Activated B cell treated with CpG ODN at 0.5 μM for 24 hours (primary cell): ENCODE measurements at regions of chr19 and their contacts with region 1.

Region 1: DNA sequence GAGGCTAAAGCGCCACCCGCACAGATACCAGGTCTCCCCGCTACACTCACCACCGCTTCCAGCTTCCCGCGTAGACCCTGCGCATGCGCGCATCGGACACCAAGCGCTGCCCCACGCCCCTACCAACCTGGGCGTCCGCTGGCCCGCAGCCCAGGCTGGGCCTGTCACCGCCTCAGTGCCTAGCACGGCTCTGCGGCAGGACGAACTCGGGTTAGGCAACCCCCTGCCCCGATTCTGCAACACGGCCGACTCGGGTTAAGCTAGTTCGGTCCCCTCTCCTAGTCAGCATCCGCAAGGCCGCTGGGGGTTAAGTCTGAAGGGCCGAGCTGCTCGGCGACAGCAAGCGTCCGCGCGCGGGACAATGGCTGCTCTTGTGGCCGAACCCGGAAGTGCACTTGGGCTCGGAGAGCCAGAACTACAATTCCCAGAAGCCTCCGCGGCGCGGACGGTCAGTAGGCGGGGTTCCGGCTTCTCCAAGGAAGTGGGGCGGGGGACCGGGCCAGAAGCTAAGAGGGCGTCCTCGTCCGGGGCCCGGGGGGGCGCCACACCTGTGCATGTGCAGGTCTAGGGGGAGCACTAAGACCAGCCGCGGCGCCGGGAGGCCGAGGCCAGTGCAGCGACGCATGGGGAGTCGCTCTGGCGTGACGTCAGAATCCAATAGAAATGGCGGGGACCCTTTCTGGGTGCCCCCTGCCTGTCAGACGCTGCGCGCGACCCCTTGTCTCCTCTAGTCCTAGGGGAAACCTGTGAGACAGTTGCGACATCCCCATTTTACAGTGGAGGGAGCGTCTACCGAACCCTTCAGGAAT is at the start of gene ZNF180:
- DNase-seq: peak; percentile 95
- ATAC-seq: peak; percentile 91
- H3K4me3 Mint-ChIP-seq: peak within 1 kb of the TSS; percentile 96
- H3K27ac Mint-ChIP-seq: peak within 1 kb of the TSS; percentile 86
- H3K4me1 Mint-ChIP-seq: peaks cover 36% of the 10 kb centered on the region
- H3K27me3 Mint-ChIP-seq: peaks cover 10% of the 10 kb centered on the region
- CTCF ChIP-seq: no peak
- total RNA-seq, gene ZNF180: 11.6 and 14.4 TPM in 2 replicates

Region 2: DNA sequence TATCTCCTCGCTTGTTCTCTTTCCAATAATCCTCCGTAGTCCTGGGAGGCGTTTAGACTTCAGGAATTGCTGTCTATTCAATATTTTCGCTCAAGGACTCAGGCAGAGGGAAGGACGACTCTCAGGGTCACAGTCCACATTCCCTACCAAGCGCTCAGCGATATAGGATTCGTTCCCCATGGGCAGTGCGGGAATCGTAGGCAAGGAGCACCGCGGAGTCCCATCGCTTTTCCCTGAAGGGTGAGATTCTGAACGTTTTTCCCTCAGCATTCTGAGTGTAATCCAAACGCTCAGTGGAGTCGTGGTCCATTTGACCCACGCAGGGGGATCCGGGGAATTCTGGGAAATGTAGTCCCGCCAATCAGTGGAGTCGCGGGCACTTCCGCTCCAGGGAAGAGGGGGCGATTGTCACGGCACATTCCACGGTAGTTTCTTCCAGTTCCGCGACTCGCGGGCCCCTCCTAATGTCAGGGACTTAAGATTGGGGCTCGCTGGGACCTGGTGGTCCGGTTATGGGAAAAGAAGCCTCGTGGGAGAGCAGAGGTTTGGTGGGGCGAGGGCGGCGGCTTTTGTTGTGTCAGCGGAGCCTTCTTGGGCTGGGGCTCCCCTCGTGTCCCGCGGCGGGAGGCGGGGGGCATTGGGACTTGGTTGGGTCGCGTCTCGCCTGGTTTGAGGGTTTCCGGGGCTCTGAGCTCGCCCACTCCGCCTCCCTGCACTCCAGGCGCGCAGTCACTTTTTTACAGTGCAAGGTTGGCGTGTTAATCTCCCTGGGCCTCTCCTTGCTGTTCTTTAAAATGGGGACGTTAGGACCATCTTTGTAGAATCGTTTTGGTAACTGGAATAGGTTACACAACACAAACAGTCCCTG is 358.9 kb before region 1 on chr19 and contains the start of gene ZNF234:
- CTCF ChIA-PET with region 1: no interaction called
- POLR2A ChIA-PET with region 1: interaction called, 5 read pairs
- intact Hi-C with region 1: loop called (anchors 1 kb)
- DNase-seq: peak; percentile 58
- ATAC-seq: peak; percentile 93
- H3K4me3 Mint-ChIP-seq: peak within 1 kb of the TSS; percentile 98
- H3K27ac Mint-ChIP-seq: peak within 1 kb of the TSS; percentile 85
- H3K4me1 Mint-ChIP-seq: peaks cover 23% of the 10 kb centered on the region
- H3K27me3 Mint-ChIP-seq: no peaks in the 10 kb centered on the region
- CTCF ChIP-seq: no peak
- total RNA-seq, gene ZNF234: 14.8 and 18.8 TPM in 2 replicates

Region 3: GRCh38 chr19:44212250-44212865 is 288.0 kb before region 1 on chr19 and contains the start of gene ZNF227:
- CTCF ChIA-PET with region 1: no interaction called
- POLR2A ChIA-PET with region 1: interaction called, 35 read pairs
- intact Hi-C with region 1: loop called (anchors 5 kb)
- DNase-seq: peak; percentile 69
- ATAC-seq: peak; percentile 93
- H3K4me3 Mint-ChIP-seq: peak within 1 kb of the TSS; percentile 95
- H3K27ac Mint-ChIP-seq: peak within 1 kb of the TSS; percentile 89
- H3K4me1 Mint-ChIP-seq: peaks cover 20% of the 10 kb centered on the region
- H3K27me3 Mint-ChIP-seq: no peaks in the 10 kb centered on the region
- CTCF ChIP-seq: no peak
- total RNA-seq, gene ZNF227: 33.1 and 36.9 TPM in 2 replicates

Region 4: GRCh38 chr19:44304659-44305193 is 195.6 kb before region 1 on chr19 and contains the start of gene ZNF235:
- CTCF ChIA-PET with region 1: no interaction called
- POLR2A ChIA-PET with region 1: interaction called, 5 read pairs
- intact Hi-C with region 1: loop called (anchors 1 kb)
- DNase-seq: peak; percentile 61
- ATAC-seq: peak; percentile 97
- H3K4me3 Mint-ChIP-seq: peak within 1 kb of the TSS; percentile 96
- H3K27ac Mint-ChIP-seq: peak within 1 kb of the TSS; percentile 76
- H3K4me1 Mint-ChIP-seq: peaks cover 20% of the 10 kb centered on the region
- H3K27me3 Mint-ChIP-seq: peaks cover 7% of the 10 kb centered on the region
- CTCF ChIP-seq: no peak
- total RNA-seq, gene ZNF235: 11.6 and 14.5 TPM in 2 replicates

Region 5: GRCh38 chr19:44401139-44402115 is 98.9 kb before region 1 on chr19 and contains the start of gene ZNF285:
- CTCF ChIA-PET with region 1: no interaction called
- POLR2A ChIA-PET with region 1: no interaction called
- intact Hi-C with region 1: loop called (anchors 1 kb)
- DNase-seq: peak; percentile 75
- ATAC-seq: peak; percentile 97
- H3K4me3 Mint-ChIP-seq: peak within 1 kb of the TSS; percentile 88
- H3K27ac Mint-ChIP-seq: peak within 1 kb of the TSS; percentile 46
- H3K4me1 Mint-ChIP-seq: peaks cover 14% of the 10 kb centered on the region
- H3K27me3 Mint-ChIP-seq: peaks cover 14% of the 10 kb centered on the region
- CTCF ChIP-seq: no peak
- total RNA-seq, gene ZNF285: 4.5 TPM in 2 replicates

Region 6: GRCh38 chr19:44447916-44448674 is 52.3 kb before region 1 on chr19 and contains the start of gene ZNF229:
- CTCF ChIA-PET with region 1: no interaction called
- POLR2A ChIA-PET with region 1: interaction called, 4 read pairs
- intact Hi-C with region 1: loop called (anchors 1 kb)
- DNase-seq: peak; percentile 69
- ATAC-seq: peak; percentile 99
- H3K4me3 Mint-ChIP-seq: peak within 1 kb of the TSS; percentile 87
- H3K27ac Mint-ChIP-seq: peak within 1 kb of the TSS; percentile 79
- H3K4me1 Mint-ChIP-seq: peaks cover 12% of the 10 kb centered on the region
- H3K27me3 Mint-ChIP-seq: peaks cover 21% of the 10 kb centered on the region
- CTCF ChIP-seq: no peak
- total RNA-seq, gene ZNF229: 3.1 and 3.7 TPM in 2 replicates